Calu3 (cell line): ENCODE measurements at regions of chr17 and their contacts with region 1.

Region 1: GRCh38 chr17:9729034-9729650 is 62.2 kb downstream of the DHRS7C start:
- DNase-seq: peak; percentile 13
- H3K4me3 Mint-ChIP-seq: no peak overlapping the region
- H3K27ac Mint-ChIP-seq: no peak overlapping the region
- H3K4me1 Mint-ChIP-seq: no peaks in the 10 kb centered on the region
- H3K27me3 Mint-ChIP-seq: no peaks in the 10 kb centered on the region
- CTCF ChIP-seq: peak; percentile 51

Region 2: GRCh38 chr17:9612006-9612405 is 117.1 kb before region 1 on chr17:
- CTCF ChIA-PET with region 1: no interaction called
- intact Hi-C with region 1: no loop called
- DNase-seq: no peak
- H3K4me3 Mint-ChIP-seq: no peak overlapping the region
- H3K27ac Mint-ChIP-seq: no peak overlapping the region
- H3K4me1 Mint-ChIP-seq: no peaks in the 10 kb centered on the region
- H3K27me3 Mint-ChIP-seq: peaks cover 12% of the 10 kb centered on the region
- CTCF ChIP-seq: no peak

Region 3: DNA sequence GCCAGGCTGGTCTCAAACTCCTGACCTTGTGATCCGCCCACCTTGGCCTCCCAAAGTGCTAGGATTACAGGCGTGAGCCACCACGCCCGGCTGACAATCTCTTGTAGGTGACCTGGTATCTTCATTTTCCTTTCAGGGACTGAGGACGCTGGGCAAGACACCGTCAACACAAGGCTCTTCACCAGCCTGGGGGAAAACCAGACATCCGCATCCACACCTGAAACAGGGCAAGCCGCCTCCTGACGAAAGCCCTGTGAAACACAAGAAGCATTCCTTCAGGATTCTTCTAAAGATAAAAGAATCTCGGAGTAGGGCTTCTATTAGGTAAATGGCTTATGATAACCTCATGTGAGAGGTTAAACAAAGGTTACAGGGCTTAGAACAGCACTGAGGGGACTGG is 14.0 kb after region 1 on chr17:
- CTCF ChIA-PET with region 1: no interaction called
- intact Hi-C with region 1: no loop called
- DNase-seq: no peak
- H3K4me3 Mint-ChIP-seq: no peak overlapping the region
- H3K27ac Mint-ChIP-seq: no peak overlapping the region
- H3K4me1 Mint-ChIP-seq: no peaks in the 10 kb centered on the region
- H3K27me3 Mint-ChIP-seq: no peaks in the 10 kb centered on the region
- CTCF ChIP-seq: no peak

Region 4: DNA sequence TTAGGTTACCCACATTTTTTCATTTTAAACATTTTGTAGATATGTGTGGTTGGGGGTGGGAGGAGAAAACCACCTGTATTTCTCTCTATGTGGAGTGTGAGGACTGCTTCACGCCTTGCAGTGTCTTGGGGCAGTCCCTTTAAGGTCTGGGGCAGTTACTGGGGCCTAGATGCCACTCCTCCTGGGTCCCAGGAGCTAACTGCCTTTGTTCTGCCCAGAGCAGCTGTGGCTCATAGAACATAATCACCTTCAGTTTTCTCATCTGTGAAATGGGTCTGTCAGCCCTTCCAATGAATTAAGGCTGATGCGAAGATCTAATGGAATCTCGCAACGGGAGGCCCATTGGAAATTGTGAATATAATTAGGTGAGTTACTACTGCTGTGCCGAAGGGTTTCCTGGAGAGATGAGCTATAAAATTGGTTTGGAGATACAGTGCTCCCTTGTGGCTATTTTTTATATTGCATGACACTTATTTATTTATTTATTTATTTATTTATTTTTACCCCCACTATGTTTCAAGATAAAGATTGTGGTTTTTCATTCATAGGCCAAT is 39.3 kb after region 1 on chr17:
- CTCF ChIA-PET with region 1: no interaction called
- intact Hi-C with region 1: loop called (anchors 5 kb)
- DNase-seq: no peak
- H3K4me3 Mint-ChIP-seq: no peak overlapping the region
- H3K27ac Mint-ChIP-seq: no peak overlapping the region
- H3K4me1 Mint-ChIP-seq: peaks cover 5% of the 10 kb centered on the region
- H3K27me3 Mint-ChIP-seq: peaks cover 25% of the 10 kb centered on the region
- CTCF ChIP-seq: peak; percentile 11

Region 5: GRCh38 chr17:9824094-9824493 is 95.0 kb after region 1 on chr17:
- CTCF ChIA-PET with region 1: no interaction called
- intact Hi-C with region 1: no loop called
- DNase-seq: no peak
- H3K4me3 Mint-ChIP-seq: no peak overlapping the region
- H3K27ac Mint-ChIP-seq: no peak overlapping the region
- H3K4me1 Mint-ChIP-seq: peaks cover 9% of the 10 kb centered on the region
- H3K27me3 Mint-ChIP-seq: no peaks in the 10 kb centered on the region
- CTCF ChIP-seq: peak; percentile 21

Region 6: GRCh38 chr17:9924735-9925191 is 195.6 kb after region 1 on chr17:
- CTCF ChIA-PET with region 1: interaction called, 4 read pairs
- intact Hi-C with region 1: loop called (anchors 1 kb)
- DNase-seq: peak; percentile 32
- H3K4me3 Mint-ChIP-seq: no peak overlapping the region
- H3K27ac Mint-ChIP-seq: no peak overlapping the region
- H3K4me1 Mint-ChIP-seq: no peaks in the 10 kb centered on the region
- H3K27me3 Mint-ChIP-seq: no peaks in the 10 kb centered on the region
- CTCF ChIP-seq: no peak